Activated CD8-positive, alpha-beta T cell treated with anti-CD3 and anti-CD28 coated beads for 36 hours (primary cell): ENCODE measurements at regions of chr11 and their contacts with region 1.

Region 1: DNA sequence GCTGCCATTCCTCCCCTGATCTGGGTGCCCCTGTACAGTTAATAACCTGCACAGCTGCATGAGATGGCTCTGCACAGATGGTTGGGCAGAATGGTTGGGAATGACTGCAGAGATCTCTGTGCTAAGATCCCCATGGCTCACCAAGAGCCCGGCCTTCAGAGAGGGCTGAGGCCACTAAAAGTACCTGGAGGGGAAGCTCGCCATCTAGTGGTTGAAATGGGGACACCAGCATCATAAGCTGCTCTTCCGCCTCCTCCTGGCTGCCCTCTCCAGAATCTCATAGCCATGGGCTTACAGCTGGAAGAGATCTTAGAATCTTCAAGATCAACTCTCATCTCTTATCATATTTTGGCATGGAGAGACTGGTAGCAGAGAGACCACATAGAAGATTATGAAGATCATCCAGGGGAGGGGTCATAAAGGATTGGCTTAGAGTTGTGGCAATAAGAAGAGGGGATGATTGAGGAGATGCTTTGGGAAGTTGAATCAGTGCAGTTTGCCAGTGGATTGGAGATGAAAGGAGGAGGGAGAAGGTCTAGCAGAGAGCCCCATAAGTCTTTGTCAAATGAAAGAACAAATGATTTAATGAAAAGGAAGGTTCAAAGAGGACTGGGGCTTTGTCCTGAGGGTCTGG is 22.0 kb upstream of the TLCD5 start:
- DNase-seq: peak; percentile 86
- ATAC-seq: peak; percentile 90
- H3K4me3 Mint-ChIP-seq: no peak overlapping the region
- H3K27ac Mint-ChIP-seq: no peak overlapping the region
- H3K4me1 Mint-ChIP-seq: no peaks in the 10 kb centered on the region
- H3K27me3 Mint-ChIP-seq: peaks cover 10% of the 10 kb centered on the region
- CTCF ChIP-seq: peak; percentile 96

Region 2: GRCh38 chr11:120172054-120172911 is 130.8 kb before region 1 on chr11:
- CTCF ChIA-PET with region 1: interaction called, 92 read pairs
- POLR2A ChIA-PET with region 1: no interaction called
- intact Hi-C with region 1: loop called (anchors 5 kb)
- DNase-seq: peak; percentile 66
- ATAC-seq: peak; percentile 79
- H3K4me3 Mint-ChIP-seq: no peak overlapping the region
- H3K27ac Mint-ChIP-seq: no peak overlapping the region
- H3K4me1 Mint-ChIP-seq: peaks cover 3% of the 10 kb centered on the region
- H3K27me3 Mint-ChIP-seq: peaks cover 43% of the 10 kb centered on the region
- CTCF ChIP-seq: peak; percentile 55

Region 3: GRCh38 chr11:120212259-120212878 is 90.8 kb before region 1 on chr11:
- CTCF ChIA-PET with region 1: interaction called, 12 read pairs
- POLR2A ChIA-PET with region 1: no interaction called
- intact Hi-C with region 1: no loop called
- DNase-seq: no peak
- ATAC-seq: no peak
- H3K4me3 Mint-ChIP-seq: peak overlapping the region; percentile 37
- H3K27ac Mint-ChIP-seq: no peak overlapping the region
- H3K4me1 Mint-ChIP-seq: peaks cover 16% of the 10 kb centered on the region
- H3K27me3 Mint-ChIP-seq: peaks cover 11% of the 10 kb centered on the region
- CTCF ChIP-seq: no peak

Region 4: DNA sequence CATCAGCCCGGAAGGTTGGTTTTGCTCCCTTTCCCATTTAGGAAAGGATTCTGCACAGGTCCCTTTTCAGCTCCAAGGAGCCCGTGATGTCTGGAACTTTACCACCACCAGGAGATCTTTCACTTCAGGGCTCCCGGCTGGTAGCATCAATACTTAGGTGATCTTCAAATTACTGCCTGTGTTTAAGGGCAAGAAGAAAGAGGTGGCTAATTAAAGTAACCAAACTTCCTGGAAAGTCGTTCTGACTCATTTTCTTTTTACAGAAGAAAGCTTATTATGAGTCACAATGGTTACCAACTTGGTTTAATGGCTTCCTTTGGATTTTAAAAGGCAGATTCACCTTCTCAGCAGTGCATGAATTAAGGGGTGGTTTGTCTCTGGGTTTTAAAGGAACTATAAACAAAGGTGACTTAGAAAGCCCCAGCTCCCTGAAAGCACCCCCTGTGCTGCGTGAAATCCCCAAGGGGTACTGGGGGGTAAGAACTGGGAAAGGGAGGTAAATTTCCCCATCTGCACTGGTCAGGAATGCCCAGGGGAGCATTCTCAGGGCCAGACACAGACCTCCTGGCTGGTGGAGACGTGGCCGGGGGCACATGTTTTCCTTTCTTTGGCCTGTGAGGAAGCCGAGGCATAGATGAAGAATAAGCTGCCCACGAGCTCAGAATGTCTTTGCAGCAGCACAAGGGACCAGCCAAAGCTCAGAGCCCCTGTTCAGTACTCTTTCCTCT is 54.4 kb before region 1 on chr11:
- CTCF ChIA-PET with region 1: interaction called, 147 read pairs
- POLR2A ChIA-PET with region 1: no interaction called
- intact Hi-C with region 1: no loop called
- DNase-seq: peak; percentile 18
- ATAC-seq: peak; percentile 82
- H3K4me3 Mint-ChIP-seq: peak overlapping the region; percentile 30
- H3K27ac Mint-ChIP-seq: peak overlapping the region; percentile 75
- H3K4me1 Mint-ChIP-seq: peaks cover 45% of the 10 kb centered on the region
- H3K27me3 Mint-ChIP-seq: peaks cover 56% of the 10 kb centered on the region
- CTCF ChIP-seq: no peak

Region 5: GRCh38 chr11:120289426-120289825 is 13.7 kb before region 1 on chr11:
- CTCF ChIA-PET with region 1: interaction called, 23 read pairs
- POLR2A ChIA-PET with region 1: no interaction called
- intact Hi-C with region 1: no loop called
- DNase-seq: no peak
- ATAC-seq: no peak
- H3K4me3 Mint-ChIP-seq: no peak overlapping the region
- H3K27ac Mint-ChIP-seq: no peak overlapping the region
- H3K4me1 Mint-ChIP-seq: no peaks in the 10 kb centered on the region
- H3K27me3 Mint-ChIP-seq: peaks cover 33% of the 10 kb centered on the region
- CTCF ChIP-seq: no peak

Region 6: GRCh38 chr11:120324932-120325810 is 22.1 kb after region 1 on chr11 and contains the start of gene TLCD5:
- CTCF ChIA-PET with region 1: interaction called, 12 read pairs
- POLR2A ChIA-PET with region 1: no interaction called
- intact Hi-C with region 1: no loop called
- DNase-seq: peak; percentile 53
- ATAC-seq: peak; percentile 80
- H3K4me3 Mint-ChIP-seq: peak within 1 kb of the TSS; percentile 65
- H3K27ac Mint-ChIP-seq: no peak within 1 kb of the TSS
- H3K4me1 Mint-ChIP-seq: peaks cover 20% of the 10 kb centered on the region
- H3K27me3 Mint-ChIP-seq: peaks cover 57% of the 10 kb centered on the region
- CTCF ChIP-seq: no peak
- total RNA-seq, gene TLCD5: 0.36 to 0.83 TPM